SK-N-SH (cell line): ENCODE measurements at regions of chr15 and their contacts with region 1.

Region 1: GRCh38 chr15:57861036-57861638 is 154.6 kb downstream of the POLR2M start:
- DNase-seq: peak; percentile 24
- H3K4me3 ChIP-seq: no peak overlapping the region; a peak in 1 of 4 replicates
- H3K27ac ChIP-seq: no peak overlapping the region
- H3K4me1 ChIP-seq: no peaks in the 10 kb centered on the region
- H3K27me3 ChIP-seq: no peaks in the 10 kb centered on the region; the same call in 1 of the 2 replicates
- CTCF ChIP-seq: peak; percentile 90
- EP300 ChIP-seq: no peak
- RAD21 ChIP-seq: peak; percentile 81

Region 2: GRCh38 chr15:57561041-57561711 is 300.0 kb before region 1 on chr15:
- CTCF ChIA-PET with region 1: interaction called, 22 read pairs
- POLR2A ChIA-PET with region 1: no interaction called
- DNase-seq: peak; percentile 73
- H3K4me3 ChIP-seq: peak overlapping the region in 1 of 2 experiments; percentile 11; a peak in 1 of 4 replicates
- H3K27ac ChIP-seq: peak overlapping the region in 1 of 2 experiments; percentile 34; a peak in 1 of 4 replicates
- H3K4me1 ChIP-seq: peaks cover 0 to 9% of the 10 kb centered on the region in 2 experiments; a peak in 1 of 4 replicates
- H3K27me3 ChIP-seq: no peaks in the 10 kb centered on the region
- CTCF ChIP-seq: peak; percentile 91
- EP300 ChIP-seq: 0 out of 4 replicates have a peak, but pooled peaks of 1 of the 2 experiments have one; percentile 11
- RAD21 ChIP-seq: peak; percentile 86

Region 3: GRCh38 chr15:57667171-57667849 is 193.8 kb before region 1 on chr15:
- CTCF ChIA-PET with region 1: interaction called, 16 read pairs
- POLR2A ChIA-PET with region 1: no interaction called
- DNase-seq: peak; percentile 42
- H3K4me3 ChIP-seq: no peak overlapping the region
- H3K27ac ChIP-seq: no peak overlapping the region
- H3K4me1 ChIP-seq: peaks cover 0 to 2% of the 10 kb centered on the region in 2 experiments; a peak in 1 of 4 replicates
- H3K27me3 ChIP-seq: no peaks in the 10 kb centered on the region; the same call in 1 of the 2 replicates
- CTCF ChIP-seq: peak; percentile 68
- EP300 ChIP-seq: no peak
- RAD21 ChIP-seq: peak; percentile 78

Region 4: GRCh38 chr15:57758560-57758959 is 102.6 kb before region 1 on chr15:
- CTCF ChIA-PET with region 1: interaction called, 315 read pairs
- POLR2A ChIA-PET with region 1: no interaction called
- DNase-seq: no peak
- H3K4me3 ChIP-seq: no peak overlapping the region
- H3K27ac ChIP-seq: no peak overlapping the region
- H3K4me1 ChIP-seq: no peaks in the 10 kb centered on the region
- H3K27me3 ChIP-seq: no peaks in the 10 kb centered on the region
- CTCF ChIP-seq: no peak
- EP300 ChIP-seq: no peak
- RAD21 ChIP-seq: no peak

Region 5: DNA sequence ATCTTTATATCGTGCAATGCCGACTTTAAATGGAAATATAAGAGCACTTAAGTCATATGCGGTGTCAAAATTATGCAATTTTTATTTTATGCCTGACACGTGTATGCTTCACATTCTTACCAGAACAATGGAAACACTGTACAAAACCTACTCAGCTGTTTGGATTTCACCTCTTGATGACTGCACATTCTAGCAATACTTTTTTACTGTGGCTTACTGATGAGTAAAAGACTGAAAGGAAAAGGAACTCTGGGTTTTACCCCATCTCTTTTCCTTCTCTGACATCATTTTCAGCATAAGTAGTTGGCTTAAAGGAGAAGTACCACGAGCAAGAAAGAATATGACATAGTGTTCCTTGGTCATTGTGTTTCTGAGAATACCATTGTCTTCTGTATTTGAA is 11.8 kb before region 1 on chr15:
- CTCF ChIA-PET with region 1: interaction called, 41 read pairs
- POLR2A ChIA-PET with region 1: no interaction called
- DNase-seq: no peak
- H3K4me3 ChIP-seq: no peak overlapping the region
- H3K27ac ChIP-seq: no peak overlapping the region
- H3K4me1 ChIP-seq: no peaks in the 10 kb centered on the region; a peak in 1 of 4 replicates
- H3K27me3 ChIP-seq: no peaks in the 10 kb centered on the region; the same call in 1 of the 2 replicates
- CTCF ChIP-seq: no peak
- EP300 ChIP-seq: no peak
- RAD21 ChIP-seq: no peak

Region 6: GRCh38 chr15:57883701-57884100 is 22.6 kb after region 1 on chr15:
- CTCF ChIA-PET with region 1: interaction called, 15 read pairs
- POLR2A ChIA-PET with region 1: no interaction called
- DNase-seq: no peak
- H3K4me3 ChIP-seq: no peak overlapping the region
- H3K27ac ChIP-seq: no peak overlapping the region
- H3K4me1 ChIP-seq: no peaks in the 10 kb centered on the region
- H3K27me3 ChIP-seq: no peaks in the 10 kb centered on the region
- CTCF ChIP-seq: no peak
- EP300 ChIP-seq: no peak
- RAD21 ChIP-seq: no peak

Region 7: GRCh38 chr15:58182460-58183163 is 321.5 kb after region 1 on chr15:
- CTCF ChIA-PET with region 1: interaction called, 14 read pairs
- POLR2A ChIA-PET with region 1: no interaction called
- DNase-seq: peak; percentile 73
- H3K4me3 ChIP-seq: no peak overlapping the region
- H3K27ac ChIP-seq: no peak overlapping the region
- H3K4me1 ChIP-seq: no peaks in the 10 kb centered on the region; a peak in 1 of 4 replicates
- H3K27me3 ChIP-seq: peaks cover 8% of the 10 kb centered on the region; the same call in 1 of the 2 replicates
- CTCF ChIP-seq: peak; percentile 75
- EP300 ChIP-seq: no peak
- RAD21 ChIP-seq: peak; percentile 94